Aorta (tissue), 5 donors: ENCODE measurements at regions of chr20 and their contacts with region 1.

Region 1: GRCh38 chr20:4592316-4593148 is 129.2 kb upstream of the PRND start:
- DNase-seq: peak; percentile 55 to 85
- ATAC-seq: peak; percentile 91
- H3K4me3 ChIP-seq: peak overlapping the region in 1 of 2 donors; percentile 17
- H3K27ac ChIP-seq: no peak overlapping the region
- H3K4me1 ChIP-seq: no peaks in the 10 kb centered on the region
- H3K27me3 ChIP-seq: no peaks in the 10 kb centered on the region

Region 2: GRCh38 chr20:4108495-4109306 is 483.8 kb before region 1 on chr20:
- intact Hi-C with region 1: loop called in 1 of 2 experiments (anchors 5 kb)
- DNase-seq: peak in 1 of 2 donors; percentile 76
- ATAC-seq: peak; percentile 79
- H3K4me3 ChIP-seq: no peak overlapping the region
- H3K27ac ChIP-seq: no peak overlapping the region
- H3K4me1 ChIP-seq: no peaks in the 10 kb centered on the region
- H3K27me3 ChIP-seq: no peaks in the 10 kb centered on the region

Region 3: DNA sequence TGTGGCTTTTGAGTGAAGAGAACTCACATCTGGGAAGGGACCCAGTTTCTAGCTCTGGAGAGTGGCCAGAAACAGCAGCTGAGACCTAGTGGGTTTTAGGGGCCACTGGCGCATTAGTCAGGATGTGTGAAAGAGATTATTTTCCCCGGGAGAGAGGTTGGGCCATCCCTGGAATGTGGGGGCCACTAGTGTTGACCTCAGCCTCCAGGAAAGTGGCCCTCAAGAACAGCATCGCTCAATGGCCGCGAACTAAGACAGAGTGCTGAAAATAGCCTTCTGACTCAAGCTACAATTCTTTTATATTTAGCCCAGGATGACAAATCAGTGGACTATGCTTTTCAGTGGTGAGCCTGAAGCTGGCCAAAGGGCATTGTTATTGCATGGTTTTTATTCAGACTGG is 366.8 kb before region 1 on chr20:
- intact Hi-C with region 1: no loop called
- DNase-seq: peak; percentile 72 to 84
- ATAC-seq: peak; percentile 77
- H3K4me3 ChIP-seq: no peak overlapping the region
- H3K27ac ChIP-seq: peak overlapping the region; percentile 57 to 91
- H3K4me1 ChIP-seq: peaks cover 3 to 5% of the 10 kb centered on the region in 2 donors
- H3K27me3 ChIP-seq: no peaks in the 10 kb centered on the region